ENCODE measurements at regions of chr1 and their contacts with region 1.

Region 1: GRCh38 chr1:154206196-154206595 is at the start of gene CFAP141:
- DNase-seq: peak in 1 of 2 donors; percentile 36
- H3K4me3 ChIP-seq: no peak within 1 kb of the TSS
- H3K27ac ChIP-seq: no peak within 1 kb of the TSS
- H3K4me1 ChIP-seq: no peaks in the 10 kb centered on the region
- H3K27me3 ChIP-seq: no peaks in the 10 kb centered on the region
- CTCF ChIP-seq: no peak
- EP300 ChIP-seq: no peak
- POLR2A ChIP-seq: no peak
- total RNA-seq, gene CFAP141: not detected

Region 2: DNA sequence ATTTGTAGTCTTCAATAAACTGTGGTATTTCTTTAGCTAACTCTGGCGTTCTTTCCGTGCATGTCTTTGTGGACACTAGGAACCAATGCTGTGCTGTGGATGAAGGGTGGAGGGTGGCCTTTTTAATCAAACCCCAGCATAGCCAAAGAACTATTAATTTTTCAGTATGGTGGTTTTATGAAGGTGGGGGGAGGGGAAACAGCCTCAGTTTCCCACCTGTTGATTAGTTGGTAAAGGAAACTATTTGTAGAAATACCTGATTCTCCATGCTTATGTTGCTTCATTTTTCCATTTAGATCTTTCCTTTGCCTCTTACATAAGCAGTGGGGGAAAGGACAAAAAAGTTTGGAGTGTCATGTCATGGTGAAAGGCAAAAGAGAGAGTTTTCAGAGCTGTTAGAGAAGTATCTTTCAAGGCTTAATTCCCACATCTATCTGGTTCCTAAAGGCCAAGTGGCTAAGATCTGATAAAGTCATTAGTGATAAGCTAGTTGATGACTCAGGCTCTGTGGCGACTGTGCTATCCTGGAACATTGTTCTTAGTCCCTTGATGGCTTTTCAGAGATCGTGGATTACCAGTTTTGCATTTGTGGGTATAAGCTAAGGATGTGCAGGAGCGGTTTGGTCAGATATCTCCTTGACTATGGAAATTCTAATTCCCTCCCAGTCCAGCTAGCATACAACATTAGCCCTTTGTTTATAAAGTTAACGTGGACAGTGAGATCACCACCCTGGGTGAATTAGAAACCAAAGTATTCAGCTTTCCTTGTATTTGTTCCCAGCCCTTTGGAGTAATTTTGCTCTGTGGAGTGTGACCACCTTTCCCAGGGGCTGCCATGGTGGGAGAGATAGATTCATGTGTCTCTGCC is 57.5 kb after region 1 on chr1:
- intact Hi-C with region 1: loop called (anchors 10 kb)
- DNase-seq: no peak
- H3K4me3 ChIP-seq: no peak overlapping the region
- H3K27ac ChIP-seq: peak overlapping the region in 1 of 5 donors; percentile 29
- H3K4me1 ChIP-seq: peaks cover 0 to 12% (median 0%) of the 10 kb centered on the region in 4 donors
- H3K27me3 ChIP-seq: no peaks in the 10 kb centered on the region
- CTCF ChIP-seq: no peak
- EP300 ChIP-seq: no peak
- POLR2A ChIP-seq: no peak

Measured in stomach (tissue), 19 donors.